Activated B cell treated with CpG ODN at 0.5 μM for 24 hours (primary cell): ENCODE measurements at regions of chr5 and their contacts with region 1.

Region 1: GRCh38 chr5:58545912-58546311 is 37.0 kb upstream of the RAB3C start:
- DNase-seq: no peak
- ATAC-seq: peak; percentile 96
- H3K4me3 Mint-ChIP-seq: peak overlapping the region; percentile 11
- H3K27ac Mint-ChIP-seq: no peak overlapping the region
- H3K4me1 Mint-ChIP-seq: peaks cover 40% of the 10 kb centered on the region
- H3K27me3 Mint-ChIP-seq: no peaks in the 10 kb centered on the region
- CTCF ChIP-seq: no peak

Region 2: DNA sequence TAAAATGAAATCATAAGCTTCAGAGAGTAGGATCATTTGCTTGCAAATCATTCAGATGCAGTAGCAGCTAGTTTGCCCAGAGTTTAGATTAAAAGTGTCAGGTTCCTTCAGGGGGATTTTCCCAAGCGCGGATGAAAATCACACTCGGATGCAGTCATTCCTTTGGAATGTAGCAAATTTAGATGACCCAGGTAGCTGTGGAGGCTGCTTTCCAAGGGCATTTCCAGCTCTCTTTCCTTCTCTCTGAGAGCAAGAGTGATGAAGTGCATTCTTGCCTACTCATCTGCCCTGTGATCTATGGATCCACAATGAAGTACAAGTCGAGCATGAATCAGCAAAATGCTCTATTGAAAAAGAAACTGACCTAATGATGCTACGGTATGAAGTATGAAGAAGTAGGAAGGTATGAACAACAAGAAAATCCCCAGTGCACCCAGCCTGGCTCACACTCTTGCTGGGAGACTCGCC is 286.2 kb before region 1 on chr5:
- CTCF ChIA-PET with region 1: no interaction called
- POLR2A ChIA-PET with region 1: no interaction called
- intact Hi-C with region 1: no loop called
- DNase-seq: no peak
- ATAC-seq: no peak
- H3K4me3 Mint-ChIP-seq: no peak overlapping the region
- H3K27ac Mint-ChIP-seq: no peak overlapping the region
- H3K4me1 Mint-ChIP-seq: no peaks in the 10 kb centered on the region
- H3K27me3 Mint-ChIP-seq: peaks cover 4% of the 10 kb centered on the region
- CTCF ChIP-seq: no peak

Region 3: GRCh38 chr5:58366461-58366860 is 179.5 kb before region 1 on chr5:
- CTCF ChIA-PET with region 1: no interaction called
- POLR2A ChIA-PET with region 1: no interaction called
- intact Hi-C with region 1: no loop called
- DNase-seq: no peak
- ATAC-seq: no peak
- H3K4me3 Mint-ChIP-seq: no peak overlapping the region
- H3K27ac Mint-ChIP-seq: no peak overlapping the region
- H3K4me1 Mint-ChIP-seq: no peaks in the 10 kb centered on the region
- H3K27me3 Mint-ChIP-seq: no peaks in the 10 kb centered on the region
- CTCF ChIP-seq: no peak

Region 4: GRCh38 chr5:58491216-58491892 is 54.6 kb before region 1 on chr5 and contains the start of gene GAPT:
- CTCF ChIA-PET with region 1: no interaction called
- POLR2A ChIA-PET with region 1: no interaction called
- intact Hi-C with region 1: loop called (anchors 1 kb)
- DNase-seq: no peak
- ATAC-seq: peak; percentile 87
- H3K4me3 Mint-ChIP-seq: peak within 1 kb of the TSS; percentile 82
- H3K27ac Mint-ChIP-seq: peak within 1 kb of the TSS; percentile 95
- H3K4me1 Mint-ChIP-seq: peaks cover 66% of the 10 kb centered on the region
- H3K27me3 Mint-ChIP-seq: no peaks in the 10 kb centered on the region
- CTCF ChIP-seq: no peak
- total RNA-seq, gene GAPT: 39.8 and 40.3 TPM in 2 replicates

Region 5: GRCh38 chr5:58505971-58506640 is 39.8 kb before region 1 on chr5:
- CTCF ChIA-PET with region 1: no interaction called
- POLR2A ChIA-PET with region 1: interaction called, 7 read pairs
- intact Hi-C with region 1: loop called (anchors 1 kb)
- DNase-seq: no peak
- ATAC-seq: peak; percentile 87
- H3K4me3 Mint-ChIP-seq: peak overlapping the region; percentile 62
- H3K27ac Mint-ChIP-seq: peak overlapping the region; percentile 78
- H3K4me1 Mint-ChIP-seq: peaks cover 80% of the 10 kb centered on the region
- H3K27me3 Mint-ChIP-seq: no peaks in the 10 kb centered on the region
- CTCF ChIP-seq: no peak